Head of caudate nucleus (tissue), 42 donors: ENCODE measurements at regions of chr9 and their contacts with region 1.

Region 1: GRCh38 chr9:97982683-97983588 is at the start of gene ANP32B:
- DNase-seq: peak; percentile 79 to 97 (median 93)

Region 2: DNA sequence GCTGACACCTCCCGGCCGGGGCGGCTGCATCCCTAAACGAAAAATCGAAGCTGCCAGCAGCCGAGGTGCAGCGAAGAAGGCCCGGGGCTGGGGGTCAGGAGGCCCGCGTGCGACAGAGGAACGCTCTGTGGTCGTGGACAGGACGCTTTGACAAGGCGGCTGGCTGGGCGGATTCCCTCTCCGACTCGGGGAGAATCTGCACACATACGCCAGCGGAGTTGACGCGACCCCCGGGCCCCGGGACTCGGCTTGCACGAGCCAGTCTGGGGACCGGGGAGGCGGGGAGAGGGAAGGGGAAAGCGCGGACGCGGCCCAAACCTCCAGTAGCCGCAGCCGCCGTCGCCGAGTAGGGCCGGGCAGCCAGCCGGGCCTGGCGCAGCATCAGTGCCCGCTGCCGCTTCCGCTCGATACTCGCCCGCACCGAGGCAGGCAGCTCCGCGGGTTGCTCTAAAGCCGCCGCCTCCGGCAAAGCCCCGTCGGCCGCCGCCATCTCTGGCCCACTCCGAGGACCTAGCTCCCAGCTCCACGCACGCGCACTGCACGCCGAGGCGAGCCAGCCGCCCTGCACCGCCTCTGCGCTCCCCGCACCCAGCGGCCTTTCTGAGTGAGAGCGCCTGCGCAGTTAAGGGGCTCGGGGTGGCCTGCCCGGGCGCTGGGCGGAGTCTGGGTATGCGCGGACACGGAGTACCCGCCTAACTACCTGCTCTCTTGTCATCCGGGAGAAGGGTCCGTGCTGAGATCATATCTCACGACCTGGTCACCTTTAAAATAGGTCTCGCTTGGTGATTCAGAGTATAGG is 285.9 kb before region 1 on chr9 and contains the start of gene XPA:
- intact Hi-C with region 1: loop called (anchors 5 kb)
- DNase-seq: peak; percentile 83 to 99 (median 97)

Region 3: GRCh38 chr9:98172561-98173003 is 189.6 kb after region 1 on chr9:
- intact Hi-C with region 1: no loop called
- DNase-seq: no peak